ENCODE measurements at regions of chr17 and their contacts with region 1.

Region 1: GRCh38 chr17:61412143-61412859 is 12.7 kb downstream of the TBX2 start:
- DNase-seq: peak; percentile 81
- ATAC-seq: peak; percentile 38
- H3K4me3 Mint-ChIP-seq: peak overlapping the region; percentile 73
- H3K27ac Mint-ChIP-seq: no peak overlapping the region
- H3K4me1 Mint-ChIP-seq: peaks cover 20% of the 10 kb centered on the region
- H3K27me3 Mint-ChIP-seq: peaks cover 90% of the 10 kb centered on the region
- CTCF ChIP-seq: peak; percentile 98

Region 2: DNA sequence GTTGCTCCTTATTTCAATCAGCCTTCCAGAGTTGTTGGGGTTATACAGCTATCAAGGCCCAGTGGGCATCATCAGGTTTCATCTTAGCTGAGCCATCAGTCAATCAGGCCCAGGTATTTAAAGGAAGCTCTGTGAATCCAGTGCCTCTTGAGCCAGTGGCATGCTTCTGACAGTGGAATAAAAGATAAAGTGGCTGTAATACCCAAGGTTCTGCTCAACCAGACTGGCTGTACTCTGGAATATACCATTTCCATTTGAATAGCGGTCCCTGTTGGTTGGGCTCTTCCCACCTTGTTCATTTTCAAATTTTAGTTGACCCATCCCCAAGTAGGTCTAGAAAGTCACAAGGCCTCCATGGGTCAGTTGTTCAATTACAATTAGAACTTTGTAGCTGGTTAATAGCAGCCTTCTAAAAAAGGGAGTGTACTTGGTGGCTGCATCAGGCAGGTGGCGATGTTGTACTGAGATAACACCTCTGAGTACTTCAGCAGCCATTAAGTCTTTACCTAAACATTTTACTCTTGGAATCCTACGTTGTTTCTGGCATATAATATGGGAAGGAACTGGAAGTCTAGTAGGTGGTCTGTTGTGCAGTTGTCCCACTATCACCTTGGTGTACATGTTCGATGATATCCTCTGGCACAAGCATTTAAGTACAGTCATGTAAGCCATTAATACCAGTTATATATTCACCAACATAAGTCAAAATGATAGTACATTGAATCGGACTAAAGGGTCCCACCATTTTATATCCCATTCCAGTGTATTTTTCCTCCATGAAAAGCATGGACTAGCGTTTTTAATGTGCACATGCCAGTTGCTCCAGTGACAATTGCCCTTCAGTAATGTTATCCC is 440.6 kb before region 1 on chr17:
- CTCF ChIA-PET with region 1: interaction called, 12 read pairs
- POLR2A ChIA-PET with region 1: no interaction called
- DNase-seq: peak; percentile 49
- ATAC-seq: peak; percentile 89
- H3K4me3 Mint-ChIP-seq: no peak overlapping the region
- H3K27ac Mint-ChIP-seq: no peak overlapping the region
- H3K4me1 Mint-ChIP-seq: peaks cover 6% of the 10 kb centered on the region
- H3K27me3 Mint-ChIP-seq: no peaks in the 10 kb centered on the region
- CTCF ChIP-seq: peak; percentile 54

Region 3: DNA sequence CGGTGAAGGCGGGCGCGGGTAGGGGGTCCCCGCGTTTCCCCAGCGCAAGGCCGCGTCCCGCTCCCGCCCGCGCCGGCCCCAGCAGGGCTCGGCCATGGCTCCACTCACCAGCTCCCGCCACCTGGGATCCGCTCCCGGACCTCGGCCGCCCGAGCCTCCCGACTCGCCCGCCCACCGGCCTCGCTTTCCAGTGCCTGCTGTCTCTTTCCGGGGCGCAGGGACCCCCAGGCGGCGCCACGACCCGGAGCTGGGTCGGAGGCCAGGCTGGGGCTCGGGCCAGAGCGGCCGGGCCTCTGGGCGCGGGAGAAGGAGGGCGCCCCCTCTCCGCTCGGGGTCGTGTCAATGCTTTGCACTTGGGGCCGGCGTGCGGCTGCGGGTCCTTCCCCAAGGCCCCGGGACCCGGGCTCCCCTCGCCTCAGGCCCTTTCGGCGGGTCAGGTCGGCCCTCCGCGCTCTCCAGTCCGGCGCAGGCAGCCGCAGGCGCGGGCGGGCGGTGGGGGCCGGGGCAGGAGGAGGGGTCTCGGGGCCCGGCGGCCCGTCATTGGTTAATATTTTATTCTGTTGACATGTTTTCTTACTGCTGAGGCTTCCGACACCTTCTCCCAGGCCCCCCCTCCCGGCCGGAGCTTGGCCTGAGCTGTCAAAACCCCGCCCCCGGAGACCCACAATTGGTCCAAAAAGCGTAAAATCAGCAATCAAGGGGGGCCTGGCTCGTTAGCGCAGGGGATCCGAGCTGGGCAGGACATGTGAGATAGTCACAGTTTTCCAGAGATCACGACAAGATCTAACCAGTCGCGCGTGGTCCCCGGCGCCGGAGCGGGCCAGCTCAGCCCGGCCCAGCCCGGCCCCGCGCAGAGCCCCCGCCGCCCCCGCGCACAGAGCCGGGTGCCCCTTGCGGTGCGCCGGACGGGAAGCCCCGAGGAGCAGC is 12.9 kb before region 1 on chr17 and contains the start of gene TBX2:
- CTCF ChIA-PET with region 1: interaction called, 37 read pairs
- POLR2A ChIA-PET with region 1: interaction called, 3 read pairs
- DNase-seq: peak; percentile 64
- ATAC-seq: peak; percentile 18
- H3K4me3 Mint-ChIP-seq: peak within 1 kb of the TSS; percentile 62
- H3K27ac Mint-ChIP-seq: no peak within 1 kb of the TSS
- H3K4me1 Mint-ChIP-seq: peaks cover 44% of the 10 kb centered on the region
- H3K27me3 Mint-ChIP-seq: peaks cover 95% of the 10 kb centered on the region
- CTCF ChIP-seq: no peak
- total RNA-seq, gene TBX2: 0.09 to 0.41 TPM (median 0.21 TPM) in 3 replicates

Region 4: GRCh38 chr17:61467416-61468259 is 55.3 kb after region 1 on chr17:
- CTCF ChIA-PET with region 1: interaction called, 39 read pairs
- POLR2A ChIA-PET with region 1: no interaction called
- DNase-seq: peak; percentile 79
- ATAC-seq: peak; percentile 70
- H3K4me3 Mint-ChIP-seq: peak overlapping the region; percentile 37; the same call in 1 of the 2 replicates
- H3K27ac Mint-ChIP-seq: no peak overlapping the region
- H3K4me1 Mint-ChIP-seq: peaks cover 19% of the 10 kb centered on the region
- H3K27me3 Mint-ChIP-seq: peaks cover 82% of the 10 kb centered on the region
- CTCF ChIP-seq: no peak

Region 5: GRCh38 chr17:61583242-61583641 is 170.9 kb after region 1 on chr17:
- CTCF ChIA-PET with region 1: interaction called, 13 read pairs
- POLR2A ChIA-PET with region 1: no interaction called
- DNase-seq: no peak
- ATAC-seq: no peak
- H3K4me3 Mint-ChIP-seq: no peak overlapping the region
- H3K27ac Mint-ChIP-seq: no peak overlapping the region
- H3K4me1 Mint-ChIP-seq: peaks cover 3% of the 10 kb centered on the region; the same call in 1 of the 2 replicates
- H3K27me3 Mint-ChIP-seq: no peaks in the 10 kb centered on the region
- CTCF ChIP-seq: no peak